Esophagus squamous epithelium (tissue), 5 donors: ENCODE measurements at regions of chr2 and their contacts with region 1.

Region 1: GRCh38 chr2:62415019-62415431 is 91.0 kb downstream of the TMEM17 start:
- DNase-seq: no peak
- H3K4me3 ChIP-seq: no peak overlapping the region
- H3K27ac ChIP-seq: peak overlapping the region in 3 of 4 donors; percentile 38 to 67 (median 55)
- H3K4me1 ChIP-seq: peaks cover 16 to 54% (median 18%) of the 10 kb centered on the region in 3 donors
- H3K27me3 ChIP-seq: no peaks in the 10 kb centered on the region
- CTCF ChIP-seq: no peak
- POLR2A ChIP-seq: no peak

Region 2: DNA sequence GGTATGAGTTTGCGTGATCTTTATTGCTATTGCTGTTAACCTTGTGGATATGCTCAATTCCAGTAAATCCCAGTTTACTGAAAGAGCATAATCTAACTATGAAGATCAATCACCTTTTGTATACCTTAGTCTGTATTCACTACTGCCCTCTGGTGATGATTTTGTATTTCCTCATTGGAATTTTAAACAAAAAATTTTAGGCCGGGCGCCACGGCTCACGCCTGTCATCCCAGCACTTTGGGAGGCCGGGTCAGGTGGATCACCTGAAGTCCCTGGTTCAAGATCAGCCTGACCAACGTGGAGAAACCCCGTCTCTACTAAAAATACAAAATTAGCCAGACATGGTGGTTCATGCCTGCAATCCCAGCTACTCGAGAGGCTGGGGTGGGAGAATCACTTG is 504.4 kb before region 1 on chr2:
- intact Hi-C with region 1: loop called (anchors 5 kb)
- DNase-seq: no peak
- H3K4me3 ChIP-seq: no peak overlapping the region
- H3K27ac ChIP-seq: no peak overlapping the region
- H3K4me1 ChIP-seq: peaks cover 0 to 37% (median 7%) of the 10 kb centered on the region in 3 donors
- H3K27me3 ChIP-seq: no peaks in the 10 kb centered on the region
- CTCF ChIP-seq: peak in 3 of 6 experiments; percentile 10 to 30 (median 21)
- POLR2A ChIP-seq: no peak

Region 3: DNA sequence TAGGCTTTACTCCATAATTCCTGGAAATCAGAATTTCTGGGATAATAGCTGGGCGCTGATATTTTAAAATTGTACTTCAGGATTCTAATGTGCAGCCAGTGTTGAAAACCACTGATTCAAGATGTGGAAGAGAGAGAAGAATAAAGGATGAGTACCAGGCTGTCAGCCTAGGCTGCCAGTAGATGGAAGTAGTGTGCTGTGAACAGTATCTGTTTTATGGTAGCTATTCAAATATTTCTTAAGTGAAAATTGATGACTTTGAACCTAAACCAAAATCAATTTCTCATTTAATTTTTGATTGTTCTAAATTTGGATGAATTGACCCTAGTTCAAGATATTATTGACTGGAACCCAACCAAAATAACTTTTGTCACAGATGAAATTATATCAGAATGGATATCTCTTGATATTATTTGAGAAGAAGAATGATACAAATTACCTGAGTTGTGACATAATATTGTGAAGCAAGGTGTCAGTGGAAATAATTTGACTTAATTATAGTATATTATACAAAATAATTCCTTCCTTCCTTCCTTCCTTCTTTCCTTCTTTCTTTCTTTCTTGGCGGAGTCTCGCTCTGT is 421.5 kb before region 1 on chr2:
- intact Hi-C with region 1: loop called (anchors 10 kb)
- DNase-seq: no peak
- H3K4me3 ChIP-seq: no peak overlapping the region
- H3K27ac ChIP-seq: no peak overlapping the region
- H3K4me1 ChIP-seq: peaks cover 0 to 5% (median under 1%) of the 10 kb centered on the region in 3 donors
- H3K27me3 ChIP-seq: no peaks in the 10 kb centered on the region
- CTCF ChIP-seq: peak in 4 of 6 experiments; percentile 51 to 74 (median 62)
- POLR2A ChIP-seq: no peak